Mammary epithelial cell (primary cell): ENCODE measurements at regions of chr9 and their contacts with region 1.

Region 1: DNA sequence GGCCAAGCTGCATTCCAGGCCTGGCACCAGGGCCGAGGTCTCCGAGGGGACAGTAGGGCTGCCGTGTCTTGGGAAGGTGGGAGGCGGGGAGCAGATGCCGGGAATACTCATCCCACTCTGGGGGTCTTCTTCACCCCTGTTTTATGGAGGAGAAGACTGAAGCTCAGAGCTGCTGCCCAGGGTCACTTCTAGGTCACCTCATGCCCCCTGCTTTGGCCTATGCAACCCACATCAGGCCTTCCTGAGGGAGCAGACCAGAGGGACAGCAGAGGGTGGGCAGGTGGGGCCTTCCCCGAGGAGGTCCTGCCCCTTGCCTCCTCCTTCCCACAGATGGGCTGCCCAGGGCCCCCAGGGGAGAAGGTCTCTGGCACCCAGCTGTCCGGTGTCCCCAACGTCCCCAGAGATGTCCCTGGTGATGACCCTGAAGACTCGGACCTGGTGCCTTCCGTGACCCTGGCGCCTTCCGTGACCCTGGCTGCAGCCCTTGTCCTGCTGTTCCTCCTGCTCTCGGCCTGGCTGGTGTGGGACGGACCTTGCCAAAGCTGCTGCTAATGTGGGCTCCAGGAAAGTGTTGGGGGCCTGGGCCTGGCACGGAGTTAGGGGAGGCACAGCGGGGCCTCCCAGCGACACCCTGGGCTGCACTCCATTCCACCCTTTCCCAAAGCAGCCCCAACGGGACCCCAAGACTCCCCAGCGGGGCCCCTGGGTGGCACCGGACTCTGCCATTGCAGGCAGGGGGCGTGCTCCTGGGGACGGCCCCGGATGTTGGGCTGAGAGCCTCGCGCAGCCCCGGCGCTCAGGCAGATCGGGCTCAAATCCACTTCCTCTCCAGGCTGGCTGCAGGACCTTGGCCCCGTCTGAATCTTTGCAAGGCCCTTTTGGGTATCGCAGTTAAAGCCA is 6.7 kb upstream of the SLC2A6 start:
- DNase-seq: no peak
- H3K4me3 ChIP-seq: no peak overlapping the region
- H3K27ac ChIP-seq: no peak overlapping the region
- H3K4me1 ChIP-seq: no peaks in the 10 kb centered on the region
- H3K27me3 ChIP-seq: no peaks in the 10 kb centered on the region
- CTCF ChIP-seq: no peak

Region 2: DNA sequence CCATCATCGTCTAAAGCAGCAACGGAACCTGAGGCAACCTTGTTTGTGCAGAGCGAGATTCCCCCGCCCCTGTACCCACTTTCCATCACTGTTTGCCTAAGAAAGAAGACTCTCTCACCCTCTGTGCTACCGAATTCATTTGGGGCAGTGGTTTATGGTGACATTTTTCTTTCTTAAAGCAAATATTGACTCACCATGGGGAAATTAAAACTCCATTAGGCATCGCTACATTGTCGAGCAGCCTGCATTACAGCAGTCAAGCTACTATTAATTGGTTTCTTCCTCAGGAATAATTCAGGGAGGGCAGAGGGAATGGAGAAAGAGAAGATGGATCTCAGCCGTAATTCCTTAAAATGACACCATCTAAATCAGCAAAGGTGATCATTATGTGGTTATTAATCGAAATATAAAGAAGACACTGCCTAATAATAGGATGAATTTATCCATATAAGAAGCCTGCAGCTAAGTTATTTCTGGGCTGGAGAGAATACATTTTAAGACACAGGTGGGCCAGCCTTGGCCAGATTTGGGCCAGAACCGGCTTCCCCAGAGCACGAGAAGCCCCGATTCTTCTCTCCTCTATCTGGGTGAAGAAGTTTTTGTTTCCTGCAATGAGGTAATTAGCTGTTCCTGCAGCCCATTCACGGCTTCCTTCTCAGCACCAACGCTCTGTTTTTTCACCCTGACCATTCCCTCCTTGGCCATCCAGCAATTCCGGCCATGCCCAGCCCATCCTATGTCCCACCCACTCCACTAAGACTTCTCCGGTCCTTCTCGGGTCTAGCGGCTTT is 1058.8 kb before region 1 on chr9:
- CTCF ChIA-PET with region 1: no interaction called
- dilution Hi-C with region 1: no loop called
- in situ Hi-C with region 1: no loop called
- intact Hi-C with region 1: no loop called
- DNase-seq: no peak
- H3K4me3 ChIP-seq: no peak overlapping the region
- H3K27ac ChIP-seq: no peak overlapping the region
- H3K4me1 ChIP-seq: no peaks in the 10 kb centered on the region
- H3K27me3 ChIP-seq: peaks cover 2% of the 10 kb centered on the region
- CTCF ChIP-seq: no peak

Region 3: GRCh38 chr9:132973713-132974112 is 511.9 kb before region 1 on chr9:
- CTCF ChIA-PET with region 1: no interaction called
- dilution Hi-C with region 1: no loop called
- in situ Hi-C with region 1: no loop called
- intact Hi-C with region 1: loop called (anchors 5 kb)
- DNase-seq: no peak
- H3K4me3 ChIP-seq: no peak overlapping the region
- H3K27ac ChIP-seq: no peak overlapping the region
- H3K4me1 ChIP-seq: peaks cover 4% of the 10 kb centered on the region
- H3K27me3 ChIP-seq: peaks cover 2% of the 10 kb centered on the region
- CTCF ChIP-seq: no peak

Region 4: DNA sequence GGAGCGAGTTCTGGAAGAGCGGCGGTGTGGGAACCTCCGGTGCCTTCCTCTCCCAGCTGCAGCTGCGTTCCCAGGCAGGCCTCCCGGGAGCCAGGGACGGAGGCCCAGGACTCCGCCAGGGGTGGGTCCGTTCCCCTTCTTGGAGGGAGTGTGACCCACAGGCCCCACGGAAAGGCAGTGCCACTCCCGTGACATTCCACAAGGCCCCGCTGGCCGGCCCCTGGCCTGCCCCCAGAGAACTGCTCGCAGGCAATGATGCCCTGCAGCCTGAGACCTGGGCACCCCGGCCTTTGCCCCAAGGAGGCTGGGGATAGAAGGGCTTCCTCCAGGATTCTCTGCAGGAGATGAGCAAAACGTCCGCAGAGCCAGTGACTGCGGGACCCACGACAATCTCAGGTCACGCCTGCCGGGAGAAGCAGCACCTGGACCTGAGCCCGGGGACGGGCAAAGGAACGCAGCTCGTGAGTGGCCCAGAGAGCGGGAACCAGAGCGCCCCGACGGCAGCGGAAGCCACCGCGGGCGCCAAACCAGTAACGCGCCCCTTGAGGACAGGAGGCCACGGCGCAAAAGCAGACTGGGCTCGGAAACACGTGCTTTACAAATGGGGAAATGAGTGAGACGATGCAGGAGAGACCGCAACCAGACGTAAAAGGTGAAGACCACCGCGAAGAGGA is 285.8 kb before region 1 on chr9:
- CTCF ChIA-PET with region 1: no interaction called
- dilution Hi-C with region 1: loop called (anchors 10 kb)
- in situ Hi-C with region 1: no loop called
- intact Hi-C with region 1: no loop called
- DNase-seq: no peak
- H3K4me3 ChIP-seq: no peak overlapping the region
- H3K27ac ChIP-seq: no peak overlapping the region
- H3K4me1 ChIP-seq: no peaks in the 10 kb centered on the region
- H3K27me3 ChIP-seq: no peaks in the 10 kb centered on the region
- CTCF ChIP-seq: no peak

Region 5: GRCh38 chr9:133394687-133395271 is 90.8 kb before region 1 on chr9:
- CTCF ChIA-PET with region 1: no interaction called
- dilution Hi-C with region 1: no loop called
- in situ Hi-C with region 1: no loop called
- intact Hi-C with region 1: no loop called
- DNase-seq: no peak
- H3K4me3 ChIP-seq: no peak overlapping the region
- H3K27ac ChIP-seq: no peak overlapping the region
- H3K4me1 ChIP-seq: no peaks in the 10 kb centered on the region
- H3K27me3 ChIP-seq: peaks cover 2% of the 10 kb centered on the region
- CTCF ChIP-seq: no peak

Region 6: GRCh38 chr9:133406480-133407307 is 78.9 kb before region 1 on chr9:
- CTCF ChIA-PET with region 1: no interaction called
- dilution Hi-C with region 1: no loop called
- in situ Hi-C with region 1: no loop called
- intact Hi-C with region 1: loop called (anchors 1 kb)
- DNase-seq: peak; percentile 58
- H3K4me3 ChIP-seq: no peak overlapping the region
- H3K27ac ChIP-seq: no peak overlapping the region
- H3K4me1 ChIP-seq: no peaks in the 10 kb centered on the region
- H3K27me3 ChIP-seq: no peaks in the 10 kb centered on the region
- CTCF ChIP-seq: peak; percentile 90 to 95

Region 7: DNA sequence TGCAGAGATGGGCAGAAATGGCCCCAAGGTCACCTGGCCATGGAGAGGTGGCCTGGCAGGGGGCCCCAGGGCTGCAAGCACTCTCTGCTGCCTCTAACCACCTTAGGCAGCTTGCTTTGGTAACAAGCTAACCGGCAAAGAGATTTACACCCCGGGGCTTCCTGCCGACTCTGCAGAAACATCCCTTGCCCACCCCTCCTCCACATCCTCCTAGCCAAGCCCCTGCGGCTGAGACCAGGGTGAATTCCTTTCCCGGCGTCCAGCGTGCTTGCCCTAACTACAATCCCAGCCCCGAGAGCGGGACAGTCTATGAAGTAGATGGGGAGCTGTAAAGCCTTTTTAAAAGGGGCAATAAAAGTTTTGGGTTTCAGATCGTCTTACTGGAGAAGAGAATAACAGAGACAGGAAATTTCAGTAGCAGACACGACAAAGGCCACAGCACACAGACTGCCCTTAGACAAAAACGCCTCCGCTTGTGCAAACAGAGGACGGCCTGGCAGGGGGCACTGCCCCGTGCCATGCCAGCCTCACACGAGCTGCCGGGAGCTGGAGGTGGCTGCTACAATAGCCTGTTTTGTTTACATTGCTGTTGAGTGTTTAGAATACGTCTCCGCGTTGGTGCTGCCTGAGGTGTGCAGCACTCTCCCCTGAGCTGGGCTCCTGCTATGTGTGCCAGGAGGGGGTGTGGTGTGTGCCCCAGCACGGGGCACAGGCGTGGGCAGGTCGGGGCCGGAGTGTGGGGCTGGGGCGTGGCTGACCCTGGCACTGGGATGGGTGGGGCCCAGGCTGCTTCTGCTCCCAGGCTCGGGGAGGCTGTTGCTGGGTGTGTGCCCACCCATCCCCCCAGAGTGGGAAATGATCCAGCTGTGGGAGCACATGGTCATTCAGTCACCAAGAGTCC is 23.8 kb after region 1 on chr9:
- CTCF ChIA-PET with region 1: interaction called, 10 read pairs
- dilution Hi-C with region 1: no loop called
- in situ Hi-C with region 1: no loop called
- intact Hi-C with region 1: no loop called
- DNase-seq: no peak
- H3K4me3 ChIP-seq: peak overlapping the region in 1 of 3 experiments; percentile 12
- H3K27ac ChIP-seq: no peak overlapping the region
- H3K4me1 ChIP-seq: peaks cover 13% of the 10 kb centered on the region
- H3K27me3 ChIP-seq: no peaks in the 10 kb centered on the region
- CTCF ChIP-seq: no peak